Gastrocnemius medialis (tissue), 4 donors: ENCODE measurements at regions of chr12 and their contacts with region 1.

Region 1: GRCh38 chr12:76790564-76791552 is 26.9 kb downstream of the ZDHHC17 start:
- DNase-seq: no peak
- ATAC-seq: peak in 1 of 2 donors; percentile 58
- H3K4me3 ChIP-seq: no peak overlapping the region
- H3K27ac ChIP-seq: peak overlapping the region in 3 of 4 donors; percentile 27 to 59 (median 27)
- H3K4me1 ChIP-seq: peaks cover 33 to 40% of the 10 kb centered on the region in 2 donors
- H3K27me3 ChIP-seq: no peaks in the 10 kb centered on the region
- CTCF ChIP-seq: peak; percentile 70 to 96 (median 75)
- POLR2A ChIP-seq: no peak

Region 2: DNA sequence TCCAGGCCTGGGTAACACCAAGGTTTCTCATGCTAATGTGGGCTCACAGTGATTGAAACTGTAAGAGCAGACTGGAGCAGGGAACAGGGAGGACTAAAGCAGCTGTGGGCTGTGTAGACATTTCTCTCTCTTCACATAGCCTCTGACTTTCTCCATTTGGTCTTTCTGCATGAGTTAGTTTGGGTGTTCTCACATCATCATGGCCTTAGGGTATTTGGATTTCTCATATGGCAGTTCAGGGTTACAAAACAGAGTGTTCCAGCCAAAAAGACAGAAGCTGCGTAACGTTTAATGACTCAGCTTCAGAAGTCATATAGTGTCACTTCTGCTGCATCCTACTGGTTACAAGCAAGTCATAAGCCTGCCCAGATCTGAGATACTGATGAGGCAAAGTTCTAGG is 179.3 kb before region 1 on chr12:
- in situ Hi-C with region 1: loop called in 3 of 4 experiments (anchors 5 to 10 kb)
- intact Hi-C with region 1: no loop called
- DNase-seq: peak in 1 of 2 donors; percentile 35
- ATAC-seq: peak; percentile 96 to 99
- H3K4me3 ChIP-seq: no peak overlapping the region
- H3K27ac ChIP-seq: peak overlapping the region; percentile 61 to 70 (median 64)
- H3K4me1 ChIP-seq: peaks cover 0 to 12% of the 10 kb centered on the region in 2 donors
- H3K27me3 ChIP-seq: no peaks in the 10 kb centered on the region
- CTCF ChIP-seq: no peak
- POLR2A ChIP-seq: peak in 1 of 2 donors; percentile 16